IMR-90 (cell line): ENCODE measurements at regions of chr17 and their contacts with region 1.

Region 1: GRCh38 chr17:3647769-3648555 is 11.4 kb downstream of the CTNS start:
- DNase-seq: peak; percentile 55
- ATAC-seq: peak; percentile 94
- H3K4me3 ChIP-seq: no peak overlapping the region
- H3K27ac ChIP-seq: no peak overlapping the region
- H3K4me1 ChIP-seq: no peaks in the 10 kb centered on the region
- H3K27me3 ChIP-seq: no peaks in the 10 kb centered on the region
- CTCF ChIP-seq: peak; percentile 49
- POLR2A ChIP-seq: no peak
- RAD21 ChIP-seq: peak; percentile 48

Region 2: GRCh38 chr17:2837147-2837561 is 810.8 kb before region 1 on chr17:
- CTCF ChIA-PET with region 1: no interaction called
- POLR2A ChIA-PET with region 1: no interaction called
- dilution Hi-C with region 1: no loop called
- in situ Hi-C with region 1: loop called (anchors 10 kb)
- intact Hi-C with region 1: no loop called
- DNase-seq: no peak
- ATAC-seq: no peak
- H3K4me3 ChIP-seq: no peak overlapping the region
- H3K27ac ChIP-seq: no peak overlapping the region
- H3K4me1 ChIP-seq: peaks cover 2% of the 10 kb centered on the region; the same call in 1 of the 2 replicates
- H3K27me3 ChIP-seq: peaks cover 8% of the 10 kb centered on the region; the same call in 1 of the 2 replicates
- CTCF ChIP-seq: no peak
- POLR2A ChIP-seq: no peak
- RAD21 ChIP-seq: no peak

Region 3: GRCh38 chr17:3048767-3049471 is 599.0 kb before region 1 on chr17:
- CTCF ChIA-PET with region 1: no interaction called
- POLR2A ChIA-PET with region 1: no interaction called
- dilution Hi-C with region 1: no loop called
- in situ Hi-C with region 1: loop called (anchors 10 kb)
- intact Hi-C with region 1: loop called (anchors 5 kb)
- DNase-seq: peak; percentile 97
- ATAC-seq: peak; percentile 100
- H3K4me3 ChIP-seq: peak overlapping the region; percentile 69
- H3K27ac ChIP-seq: peak overlapping the region; percentile 61
- H3K4me1 ChIP-seq: no peaks in the 10 kb centered on the region
- H3K27me3 ChIP-seq: no peaks in the 10 kb centered on the region
- CTCF ChIP-seq: peak; percentile 64
- POLR2A ChIP-seq: no peak
- RAD21 ChIP-seq: peak; percentile 71

Region 4: GRCh38 chr17:3636154-3636907 is 11.6 kb before region 1 on chr17 and contains the starts of genes CTNS and SHPK:
- CTCF ChIA-PET with region 1: interaction called, 10 read pairs
- POLR2A ChIA-PET with region 1: no interaction called
- dilution Hi-C with region 1: no loop called
- in situ Hi-C with region 1: no loop called
- intact Hi-C with region 1: no loop called
- DNase-seq: peak; percentile 94
- ATAC-seq: peak; percentile 98
- H3K4me3 ChIP-seq: peak within 1 kb of the TSS; percentile 88
- H3K27ac ChIP-seq: peak within 1 kb of the TSS; percentile 93
- H3K4me1 ChIP-seq: peaks cover 6% of the 10 kb centered on the region
- H3K27me3 ChIP-seq: no peaks in the 10 kb centered on the region
- CTCF ChIP-seq: no peak
- POLR2A ChIP-seq: no peak; the same call in 1 of the 2 replicates
- RAD21 ChIP-seq: no peak
- total RNA-seq, gene CTNS: 4.7 and 6.9 TPM in 2 replicates
- total RNA-seq, gene SHPK: 12.8 and 14.3 TPM in 2 replicates

Region 5: GRCh38 chr17:3693829-3694231 is 45.9 kb after region 1 on chr17:
- CTCF ChIA-PET with region 1: no interaction called
- POLR2A ChIA-PET with region 1: no interaction called
- dilution Hi-C with region 1: no loop called
- in situ Hi-C with region 1: no loop called
- intact Hi-C with region 1: no loop called
- DNase-seq: no peak
- ATAC-seq: no peak
- H3K4me3 ChIP-seq: no peak overlapping the region
- H3K27ac ChIP-seq: no peak overlapping the region
- H3K4me1 ChIP-seq: peaks cover 4% of the 10 kb centered on the region; the same call in 1 of the 2 replicates
- H3K27me3 ChIP-seq: peaks cover 17% of the 10 kb centered on the region
- CTCF ChIP-seq: no peak
- POLR2A ChIP-seq: no peak
- RAD21 ChIP-seq: no peak

Region 6: GRCh38 chr17:4440690-4441686 is 793.0 kb after region 1 on chr17:
- CTCF ChIA-PET with region 1: no interaction called
- POLR2A ChIA-PET with region 1: no interaction called
- dilution Hi-C with region 1: no loop called
- in situ Hi-C with region 1: no loop called
- intact Hi-C with region 1: no loop called
- DNase-seq: no peak
- ATAC-seq: no peak
- H3K4me3 ChIP-seq: no peak overlapping the region
- H3K27ac ChIP-seq: no peak overlapping the region
- H3K4me1 ChIP-seq: no peaks in the 10 kb centered on the region
- H3K27me3 ChIP-seq: peaks cover 31% of the 10 kb centered on the region
- CTCF ChIP-seq: no peak
- POLR2A ChIP-seq: no peak
- RAD21 ChIP-seq: no peak